Activated naive CD4-positive, alpha-beta T cell treated with anti-CD3 and anti-CD28 coated beads for 36 hours (primary cell): ENCODE measurements at regions of chr4 and their contacts with region 1.

Region 1: GRCh38 chr4:129093191-129093920 is at the start of gene SCLT1:
- DNase-seq: peak; percentile 98
- H3K4me3 Mint-ChIP-seq: peak within 1 kb of the TSS; percentile 55
- H3K27ac Mint-ChIP-seq: no peak within 1 kb of the TSS
- H3K4me1 Mint-ChIP-seq: peaks cover 31% of the 10 kb centered on the region
- H3K27me3 Mint-ChIP-seq: no peaks in the 10 kb centered on the region
- total RNA-seq, gene SCLT1: 20.3 to 21.1 TPM

Region 2: GRCh38 chr4:127880764-127881562 is 1212.4 kb before region 1 on chr4 and contains the start of gene PLK4:
- CTCF ChIA-PET with region 1: no interaction called
- intact Hi-C with region 1: loop called (anchors 1 kb)
- DNase-seq: peak; percentile 97
- H3K4me3 Mint-ChIP-seq: peak within 1 kb of the TSS; percentile 98
- H3K27ac Mint-ChIP-seq: peak within 1 kb of the TSS; percentile 98
- H3K4me1 Mint-ChIP-seq: peaks cover 18% of the 10 kb centered on the region
- H3K27me3 Mint-ChIP-seq: peaks cover 3% of the 10 kb centered on the region
- total RNA-seq, gene PLK4: 44.7 to 52.3 TPM

Region 3: DNA sequence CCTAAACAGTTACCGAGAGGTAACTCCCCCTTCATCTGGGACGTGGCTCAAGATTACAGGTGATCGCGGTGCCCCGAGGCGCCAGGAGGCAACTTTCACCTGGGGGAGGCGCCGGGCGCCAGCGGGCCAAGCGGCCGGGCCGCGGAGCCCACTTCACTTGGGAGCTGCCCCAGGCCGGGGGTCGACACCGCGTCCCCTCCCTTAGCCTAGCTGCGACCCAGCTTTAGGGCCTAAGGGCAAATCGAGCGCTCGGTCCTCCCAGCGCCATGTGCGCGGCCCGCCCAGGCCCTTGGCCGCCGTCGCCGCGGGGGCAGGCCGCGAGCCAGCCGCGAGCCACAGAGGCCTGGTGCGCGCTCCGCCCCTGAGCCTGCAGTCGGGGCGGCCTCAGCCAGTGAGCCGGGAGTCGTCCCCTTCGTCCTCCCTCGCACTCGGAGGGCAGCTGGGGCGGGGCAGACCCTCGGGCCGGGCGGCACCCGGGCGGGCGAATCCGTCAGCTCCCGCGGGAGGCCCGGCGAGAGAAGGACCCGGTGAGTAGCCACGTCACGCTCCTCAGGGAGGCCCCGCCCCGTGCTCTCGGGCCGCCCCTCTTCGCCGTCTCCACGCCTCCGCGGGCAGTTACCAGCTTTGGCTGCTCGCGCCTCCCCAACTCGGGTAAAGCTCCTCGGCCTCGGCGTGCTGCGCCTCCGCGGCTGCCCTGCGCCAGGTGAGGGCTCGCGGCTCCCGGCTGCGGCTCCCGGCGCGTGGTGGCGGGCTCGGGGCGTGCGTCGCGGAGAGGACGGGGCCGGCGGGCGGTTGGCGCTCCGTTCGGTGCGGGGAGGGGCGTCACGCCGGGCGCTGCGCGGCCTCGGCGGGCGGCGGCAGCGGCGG is 1032.4 kb before region 1 on chr4 and contains the start of gene LARP1B:
- CTCF ChIA-PET with region 1: no interaction called
- intact Hi-C with region 1: loop called (anchors 2 kb)
- DNase-seq: peak; percentile 94
- H3K4me3 Mint-ChIP-seq: peak within 1 kb of the TSS; percentile 82
- H3K27ac Mint-ChIP-seq: peak within 1 kb of the TSS; percentile 81
- H3K4me1 Mint-ChIP-seq: peaks cover 16% of the 10 kb centered on the region
- H3K27me3 Mint-ChIP-seq: no peaks in the 10 kb centered on the region
- total RNA-seq, gene LARP1B: 17.6 to 18.9 TPM

Region 4: DNA sequence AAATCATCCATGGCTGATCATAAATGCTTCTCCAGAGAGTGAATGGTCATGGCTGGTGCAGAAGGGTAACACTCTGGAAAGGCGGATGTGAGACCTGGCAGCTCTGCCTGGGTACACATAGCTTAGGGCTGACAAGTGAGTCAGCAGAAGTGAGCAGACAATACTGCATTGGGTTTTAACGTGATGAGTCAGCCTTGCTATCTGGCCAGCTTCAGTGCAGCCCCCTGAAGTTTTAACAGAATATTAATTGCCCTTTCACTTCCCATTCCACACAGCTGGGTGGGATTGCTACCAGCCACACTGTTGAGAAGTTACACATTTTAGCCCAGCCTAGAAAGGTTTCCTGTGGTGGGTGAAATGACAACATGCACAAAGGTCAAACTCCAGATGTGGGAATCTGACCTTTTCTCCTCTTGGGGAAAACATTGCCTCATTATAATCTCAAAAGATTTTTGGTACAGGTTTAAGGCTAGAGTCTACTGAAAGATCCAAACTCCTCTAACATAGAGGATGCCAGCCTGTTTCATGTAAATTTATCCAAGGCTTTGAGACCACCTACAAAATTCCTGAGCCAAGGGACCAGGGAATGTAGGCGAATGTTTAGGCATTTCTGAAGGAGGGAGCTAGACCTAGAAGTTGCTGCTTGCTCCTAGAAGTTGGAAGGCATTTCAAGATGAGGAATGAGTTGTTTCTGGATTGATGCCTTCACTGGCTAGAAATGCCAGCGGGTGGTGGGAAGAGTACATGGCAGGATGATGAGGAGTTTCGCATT is 575.4 kb before region 1 on chr4:
- CTCF ChIA-PET with region 1: no interaction called
- intact Hi-C with region 1: loop called (anchors 5 kb)
- DNase-seq: peak; percentile 8
- H3K4me3 Mint-ChIP-seq: no peak overlapping the region
- H3K27ac Mint-ChIP-seq: no peak overlapping the region
- H3K4me1 Mint-ChIP-seq: peaks cover 12% of the 10 kb centered on the region
- H3K27me3 Mint-ChIP-seq: peaks cover 2% of the 10 kb centered on the region

Region 5: DNA sequence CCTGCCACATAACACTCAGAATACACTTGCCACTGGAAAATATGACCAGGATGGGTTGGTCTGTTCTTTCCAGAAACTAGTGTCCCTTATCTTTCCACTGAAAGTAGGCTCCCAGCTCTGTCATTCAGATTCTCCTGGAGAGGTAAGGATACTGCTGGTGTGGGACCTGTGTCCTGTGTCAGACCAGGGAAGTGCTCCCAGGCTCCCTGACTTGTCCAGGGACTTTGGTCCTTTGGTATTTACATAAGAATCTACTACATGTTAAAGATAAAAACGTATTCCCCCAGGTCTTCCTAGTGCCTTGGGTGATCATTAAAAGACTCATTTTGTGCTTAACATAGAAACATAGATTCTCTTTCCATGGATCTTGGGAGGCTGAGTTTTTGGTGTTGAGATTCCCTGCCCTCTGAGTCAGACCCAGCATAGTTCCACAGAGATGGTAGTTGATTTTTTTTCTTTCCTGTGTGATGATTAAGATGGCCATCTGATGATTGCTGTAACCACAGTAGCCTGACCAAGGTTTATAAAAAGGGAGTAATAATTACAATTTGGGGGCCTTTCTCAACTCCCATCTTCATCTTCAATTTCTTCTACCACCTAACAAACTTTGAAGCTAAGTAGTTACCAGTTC is 443.7 kb before region 1 on chr4:
- CTCF ChIA-PET with region 1: no interaction called
- intact Hi-C with region 1: no loop called
- DNase-seq: no peak
- H3K4me3 Mint-ChIP-seq: no peak overlapping the region
- H3K27ac Mint-ChIP-seq: no peak overlapping the region
- H3K4me1 Mint-ChIP-seq: no peaks in the 10 kb centered on the region
- H3K27me3 Mint-ChIP-seq: no peaks in the 10 kb centered on the region

Region 6: GRCh38 chr4:128863312-128864075 is 229.9 kb before region 1 on chr4:
- CTCF ChIA-PET with region 1: no interaction called
- intact Hi-C with region 1: loop called (anchors 1 kb)
- DNase-seq: peak; percentile 75
- H3K4me3 Mint-ChIP-seq: no peak overlapping the region
- H3K27ac Mint-ChIP-seq: peak overlapping the region; percentile 62
- H3K4me1 Mint-ChIP-seq: peaks cover 48% of the 10 kb centered on the region
- H3K27me3 Mint-ChIP-seq: no peaks in the 10 kb centered on the region